Activated naive CD4-positive, alpha-beta T cell treated with anti-CD3 and anti-CD28 coated beads, Interleukin-2, amount 10 ng/mL, durations not matched to agents 7 days and 5 days (primary cell): ENCODE measurements at regions of chr3 and their contacts with region 1.

Region 1: GRCh38 chr3:12841149-12841970 is at the start of gene RPL32:
- DNase-seq: peak; percentile 89
- H3K4me3 Mint-ChIP-seq: peak within 1 kb of the TSS; percentile 95
- H3K27ac Mint-ChIP-seq: peak within 1 kb of the TSS; percentile 98
- H3K4me1 Mint-ChIP-seq: peaks cover 49% of the 10 kb centered on the region
- H3K27me3 Mint-ChIP-seq: no peaks in the 10 kb centered on the region

Region 2: GRCh38 chr3:12773710-12774086 is 67.7 kb before region 1 on chr3:
- CTCF ChIA-PET with region 1: no interaction called
- DNase-seq: no peak
- H3K4me3 Mint-ChIP-seq: no peak overlapping the region
- H3K27ac Mint-ChIP-seq: no peak overlapping the region
- H3K4me1 Mint-ChIP-seq: peaks cover 8% of the 10 kb centered on the region
- H3K27me3 Mint-ChIP-seq: peaks cover 44% of the 10 kb centered on the region

Region 3: DNA sequence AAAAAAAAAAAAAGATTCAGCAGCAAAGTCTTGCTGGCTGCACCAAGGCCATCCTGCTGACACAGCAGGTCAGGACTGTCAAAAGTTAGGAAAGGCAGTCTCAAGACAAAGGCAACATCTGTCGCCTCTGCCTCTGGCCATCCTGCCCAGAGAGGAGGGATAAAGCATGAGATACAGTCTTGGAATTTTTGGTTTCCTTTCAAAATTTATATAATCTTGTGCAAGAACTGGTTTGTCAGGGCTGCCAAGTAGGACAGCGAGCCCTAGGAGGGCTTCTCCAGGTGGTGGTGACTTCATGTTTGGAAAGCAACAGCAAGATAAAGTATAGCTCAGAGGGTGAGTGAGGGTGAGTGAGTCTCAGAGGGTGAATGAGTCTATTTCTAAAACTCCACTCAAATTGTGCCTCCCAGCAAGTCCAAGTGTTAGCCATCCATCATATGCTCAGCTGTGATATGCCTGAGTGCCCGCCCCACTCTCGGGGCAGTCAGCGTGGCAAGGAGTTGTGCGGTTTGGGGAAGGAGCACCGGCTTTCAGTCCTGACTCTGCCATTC is 11.9 kb after region 1 on chr3:
- CTCF ChIA-PET with region 1: interaction called, 10 read pairs
- DNase-seq: no peak
- H3K4me3 Mint-ChIP-seq: no peak overlapping the region
- H3K27ac Mint-ChIP-seq: no peak overlapping the region
- H3K4me1 Mint-ChIP-seq: no peaks in the 10 kb centered on the region
- H3K27me3 Mint-ChIP-seq: peaks cover 62% of the 10 kb centered on the region